ENCODE measurements at regions of chr13 and their contacts with region 1.

Region 1: DNA sequence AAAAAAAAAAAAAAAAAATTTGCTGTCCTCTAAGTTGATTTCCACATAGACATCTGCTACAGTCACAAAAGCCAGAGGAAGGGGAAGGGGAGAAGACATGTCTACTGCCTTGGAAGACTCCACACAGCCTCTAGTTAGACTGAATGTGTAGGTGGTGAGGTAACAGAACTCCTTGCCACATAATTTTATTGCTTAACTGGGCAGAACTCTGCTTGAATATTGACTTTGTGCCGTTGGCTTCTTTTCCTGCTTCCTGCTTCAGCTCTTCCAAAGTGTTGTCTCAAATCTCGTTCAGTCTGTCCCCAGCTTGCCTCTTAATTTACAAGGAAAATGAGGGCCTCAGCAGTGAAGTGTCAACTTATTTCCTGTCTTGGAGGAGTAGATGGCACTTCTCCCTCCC is 37.1 kb downstream of the ESD start:
- H3K4me3 ChIP-seq: no peak overlapping the region
- H3K27ac ChIP-seq: no peak overlapping the region
- H3K4me1 ChIP-seq: no peaks in the 10 kb centered on the region
- CTCF ChIP-seq: no peak

Region 2: GRCh38 chr13:46387064-46387851 is 372.6 kb before region 1 on chr13 and contains the start of gene RUBCNL:
- CTCF ChIA-PET with region 1: no interaction called
- POLR2A ChIA-PET with region 1: no interaction called
- H3K4me3 ChIP-seq: peak within 1 kb of the TSS; percentile 50
- H3K27ac ChIP-seq: no peak within 1 kb of the TSS
- H3K4me1 ChIP-seq: no peaks in the 10 kb centered on the region
- CTCF ChIP-seq: no peak; the same call in 1 of the 2 replicates

Region 3: GRCh38 chr13:46775385-46776107 is 15.7 kb after region 1 on chr13:
- CTCF ChIA-PET with region 1: interaction called, 11 read pairs
- POLR2A ChIA-PET with region 1: no interaction called
- H3K4me3 ChIP-seq: no peak overlapping the region
- H3K27ac ChIP-seq: no peak overlapping the region
- H3K4me1 ChIP-seq: no peaks in the 10 kb centered on the region
- CTCF ChIP-seq: no peak